PC-3 (cell line): ENCODE measurements at regions of chr14 and their contacts with region 1.

Region 1: GRCh38 chr14:51094901-51095853 is at the start of gene TRIM9:
- DNase-seq: peak; percentile 99
- ATAC-seq: peak; percentile 97
- H3K4me3 ChIP-seq: peak within 1 kb of the TSS; percentile 66
- H3K27ac ChIP-seq: peak within 1 kb of the TSS; percentile 45
- H3K4me1 ChIP-seq: peaks cover 12% of the 10 kb centered on the region; the same call in 1 of the 2 replicates
- H3K27me3 ChIP-seq: no peaks in the 10 kb centered on the region
- CTCF ChIP-seq: no peak
- total RNA-seq, gene TRIM9: 2.5 and 2.6 TPM in 2 replicates

Region 2: GRCh38 chr14:51006781-51007211 is 88.4 kb before region 1 on chr14:
- CTCF ChIA-PET with region 1: no interaction called
- POLR2A ChIA-PET with region 1: interaction called, 3 read pairs
- intact Hi-C with region 1: loop called (anchors 2 kb)
- DNase-seq: peak; percentile 86
- ATAC-seq: peak; percentile 77
- H3K4me3 ChIP-seq: peak overlapping the region; percentile 6; the same call in 1 of the 2 replicates
- H3K27ac ChIP-seq: peak overlapping the region; percentile 75
- H3K4me1 ChIP-seq: peaks cover 45% of the 10 kb centered on the region
- H3K27me3 ChIP-seq: no peaks in the 10 kb centered on the region
- CTCF ChIP-seq: no peak

Region 3: DNA sequence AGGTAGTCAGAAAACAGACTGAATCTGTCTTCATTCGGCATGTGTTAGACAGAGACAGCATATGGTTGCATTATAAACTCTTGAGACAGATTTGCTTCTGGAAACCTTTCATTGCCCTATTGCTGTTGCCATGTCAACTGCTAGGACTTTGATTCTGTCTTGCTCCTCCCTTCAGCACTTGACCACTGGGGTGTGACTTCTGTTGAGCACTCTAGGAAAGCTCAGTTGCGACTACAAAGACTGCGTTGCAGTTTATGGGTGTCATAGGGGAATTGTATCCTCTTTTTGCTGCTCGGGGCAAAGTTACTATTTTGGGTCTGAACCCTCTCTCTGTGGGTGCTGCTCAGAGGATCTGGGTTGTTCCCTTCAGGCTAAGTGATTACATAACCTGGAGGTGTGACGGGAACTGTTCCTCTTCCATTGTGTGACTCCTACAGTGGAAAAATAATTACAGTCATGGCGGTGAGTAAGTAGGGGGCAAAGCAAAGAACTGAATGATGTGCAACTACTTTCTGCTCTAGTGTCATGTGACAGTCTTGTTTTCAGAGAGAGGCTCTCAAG is 44.0 kb after region 1 on chr14:
- CTCF ChIA-PET with region 1: no interaction called
- POLR2A ChIA-PET with region 1: no interaction called
- intact Hi-C with region 1: loop called (anchors 5 kb)
- DNase-seq: no peak
- ATAC-seq: peak; percentile 11; the same call in 1 of the 2 replicates
- H3K4me3 ChIP-seq: no peak overlapping the region
- H3K27ac ChIP-seq: no peak overlapping the region
- H3K4me1 ChIP-seq: no peaks in the 10 kb centered on the region
- H3K27me3 ChIP-seq: no peaks in the 10 kb centered on the region
- CTCF ChIP-seq: no peak

Region 4: DNA sequence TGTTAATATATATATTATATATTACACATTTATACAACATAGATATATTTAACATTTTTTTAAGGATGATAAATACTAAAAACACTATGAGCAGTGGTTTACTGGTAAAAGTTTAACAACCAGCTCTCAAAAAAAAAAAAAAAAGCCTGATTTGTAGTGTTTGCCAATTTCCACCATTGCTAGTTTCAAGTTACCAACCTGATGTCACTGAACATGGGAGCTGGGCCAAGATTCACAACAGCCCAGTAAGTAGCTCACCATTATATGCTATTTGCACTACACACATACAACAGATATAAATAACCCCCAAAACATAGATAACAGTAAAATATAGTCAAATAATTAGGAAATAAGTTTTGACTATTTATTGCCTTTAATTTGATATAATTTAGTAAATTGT is 116.0 kb after region 1 on chr14:
- CTCF ChIA-PET with region 1: no interaction called
- POLR2A ChIA-PET with region 1: no interaction called
- intact Hi-C with region 1: loop called (anchors 1 kb)
- DNase-seq: peak; percentile 63
- ATAC-seq: peak; percentile 71
- H3K4me3 ChIP-seq: no peak overlapping the region
- H3K27ac ChIP-seq: no peak overlapping the region
- H3K4me1 ChIP-seq: peaks cover 7% of the 10 kb centered on the region; the same call in 1 of the 2 replicates
- H3K27me3 ChIP-seq: no peaks in the 10 kb centered on the region
- CTCF ChIP-seq: no peak